ENCODE measurements at regions of chr17 and their contacts with region 1.

Region 1: DNA sequence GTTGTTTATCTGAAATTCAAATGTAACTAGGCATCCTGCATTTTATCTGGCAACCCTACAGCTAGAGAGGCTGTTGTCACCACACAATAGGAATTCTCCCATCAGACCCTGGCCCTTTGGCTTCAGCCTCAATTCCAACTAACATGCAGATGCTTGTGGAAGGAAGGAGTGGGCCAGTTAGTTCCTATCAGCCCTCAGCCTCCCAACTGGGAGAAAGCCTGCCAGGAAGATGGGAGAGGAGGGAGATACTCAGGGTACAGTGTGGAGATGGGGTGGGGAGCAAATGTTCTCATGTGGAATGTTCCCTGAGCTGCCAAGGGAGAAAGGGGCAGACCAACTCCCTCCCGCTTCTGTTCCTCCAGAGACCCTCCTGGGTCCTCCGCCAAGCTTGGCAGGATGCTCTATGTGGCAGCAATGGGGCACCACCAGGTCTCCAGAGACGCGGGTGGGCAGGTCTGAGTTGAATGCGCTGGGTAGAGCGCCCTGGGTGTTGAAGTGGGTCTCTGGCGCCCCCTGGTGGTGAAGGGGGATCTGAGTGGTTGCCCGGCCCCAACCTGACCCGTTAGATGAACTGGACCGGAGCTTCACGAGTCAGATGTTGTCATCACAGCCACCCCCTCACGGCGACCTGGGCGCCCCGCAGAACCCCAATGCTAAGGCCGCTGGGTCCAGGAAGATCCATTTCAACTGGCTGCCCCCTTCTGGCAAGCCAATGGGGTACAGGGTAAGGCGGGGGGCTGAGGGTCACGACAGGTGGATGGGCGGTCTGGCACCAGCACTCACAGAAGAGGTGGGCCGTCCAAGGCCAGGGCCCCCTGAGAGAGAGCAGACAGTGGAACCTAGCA is 15.2 kb downstream of the GALK1 start:
- DNase-seq: peak; percentile 86
- CTCF ChIP-seq: peak; percentile 89

Region 2: DNA sequence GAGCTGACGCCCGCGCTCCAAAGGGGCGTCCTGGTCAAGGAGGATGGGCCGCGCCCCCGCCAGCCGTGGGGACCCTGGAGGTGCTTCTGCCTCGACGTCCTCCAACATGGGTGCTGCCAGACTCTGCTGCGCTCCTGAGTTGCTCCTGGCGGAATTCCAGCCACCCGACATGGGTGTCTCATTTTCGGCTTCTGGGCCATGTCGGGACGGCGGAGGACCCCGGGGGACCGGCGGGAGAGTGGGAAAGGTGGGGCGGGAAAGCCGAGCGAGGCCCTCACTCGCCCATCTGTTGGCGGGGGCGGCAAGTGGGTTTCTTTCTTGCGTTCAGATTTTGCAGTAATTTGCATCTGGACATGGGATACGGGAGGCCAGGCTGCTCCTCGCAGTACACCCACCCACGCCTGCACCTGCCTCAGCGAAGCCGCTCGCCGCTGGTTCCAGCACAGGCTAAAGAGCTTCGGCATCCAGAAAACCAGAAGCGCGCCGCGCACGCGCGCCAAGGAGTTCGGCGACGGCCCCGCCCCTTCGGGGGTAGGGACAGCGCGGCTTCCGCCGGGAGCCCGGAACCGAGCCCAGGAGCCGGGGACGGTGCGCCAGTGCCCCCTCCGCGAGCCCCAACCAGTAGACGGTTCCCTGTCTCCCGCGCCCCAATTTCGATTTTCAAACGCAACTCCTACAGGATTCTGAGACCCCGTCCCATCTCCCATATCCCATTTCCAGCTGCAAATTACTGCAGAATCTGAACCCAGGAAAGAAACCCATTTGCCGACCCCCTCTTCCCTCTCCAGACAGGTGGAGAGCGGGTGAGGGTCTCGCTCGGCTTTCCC is 640.1 kb before region 1 on chr17 and contains the start of gene ARMC7:
- CTCF ChIA-PET with region 1: no interaction called
- POLR2A ChIA-PET with region 1: no interaction called
- DNase-seq: peak; percentile 97
- CTCF ChIP-seq: no peak

Region 3: DNA sequence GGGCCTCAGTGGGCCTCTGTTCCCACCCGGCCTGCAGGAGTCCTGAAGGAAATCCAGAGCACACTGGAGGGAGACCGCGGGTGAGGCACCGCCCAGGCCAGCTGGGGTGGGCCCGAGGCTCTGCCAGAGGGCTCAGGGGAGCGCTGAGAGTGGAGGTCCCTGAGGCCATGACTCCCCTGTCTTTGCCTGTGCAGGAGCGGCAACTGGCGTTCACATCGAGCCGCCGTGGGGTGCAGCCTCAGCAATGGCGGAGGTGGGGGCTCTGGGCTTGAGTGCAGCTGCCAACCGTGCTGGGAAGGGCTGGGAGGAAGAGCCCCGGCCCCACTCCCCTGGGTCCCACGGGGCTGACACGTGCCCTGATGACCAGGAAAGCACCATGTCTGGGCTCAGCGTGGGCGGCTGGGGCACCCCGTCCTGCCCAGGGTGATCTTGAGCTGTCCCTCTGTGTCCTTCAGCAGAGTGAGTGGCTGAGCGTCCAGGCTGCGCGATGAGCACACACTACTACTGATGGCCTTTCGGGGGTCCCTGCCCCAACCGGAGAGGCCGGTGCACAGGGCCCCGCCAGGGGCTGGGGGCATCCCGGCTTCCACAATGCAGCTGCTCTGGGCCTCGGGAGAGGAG is 175.2 kb before region 1 on chr17:
- CTCF ChIA-PET with region 1: interaction called, 11 read pairs
- POLR2A ChIA-PET with region 1: no interaction called
- DNase-seq: no peak
- CTCF ChIP-seq: no peak

Region 4: DNA sequence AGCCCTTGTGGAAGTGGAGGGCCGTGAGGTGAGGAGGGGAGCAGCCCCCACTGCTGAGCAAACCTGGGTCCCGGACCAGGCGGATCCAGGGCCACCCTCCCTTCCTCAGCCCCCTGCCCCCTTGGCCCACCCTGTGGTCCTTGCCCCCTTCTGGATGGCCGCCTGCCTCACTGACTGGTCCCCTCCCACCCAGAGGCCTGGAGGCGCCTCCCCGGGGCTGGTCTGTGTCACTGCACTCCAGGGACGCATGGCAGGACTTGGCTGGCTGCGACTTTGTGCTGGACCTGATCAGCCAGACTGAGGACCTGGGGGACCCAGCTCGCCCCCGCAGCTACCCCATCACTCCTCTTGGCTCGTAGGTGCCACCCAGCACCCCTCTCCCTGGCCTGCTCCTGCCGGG is 135.8 kb before region 1 on chr17:
- CTCF ChIA-PET with region 1: interaction called, 856 read pairs
- POLR2A ChIA-PET with region 1: no interaction called
- DNase-seq: no peak
- CTCF ChIP-seq: no peak

Region 5: DNA sequence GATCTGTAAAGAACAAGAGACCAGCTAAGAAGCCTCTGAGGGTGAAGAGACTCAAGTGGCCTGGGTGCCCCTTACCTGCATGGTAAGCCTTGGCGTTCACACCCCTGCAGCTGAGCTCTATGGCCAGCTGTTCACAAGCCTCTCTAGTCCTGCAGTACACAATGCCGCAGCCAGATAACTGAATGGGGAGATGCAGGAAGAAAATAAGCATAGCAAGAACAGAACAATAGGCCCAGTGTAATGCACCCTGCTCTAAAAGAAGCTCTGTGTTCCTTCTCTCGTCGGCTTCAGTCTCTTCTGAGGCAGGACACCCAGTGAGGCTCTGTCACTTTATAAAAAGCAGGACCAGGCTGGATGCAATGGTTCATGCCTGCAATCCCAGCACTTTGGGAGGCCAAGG is 88.2 kb before region 1 on chr17:
- CTCF ChIA-PET with region 1: interaction called, 52 read pairs
- POLR2A ChIA-PET with region 1: interaction called, 3 read pairs
- DNase-seq: no peak
- CTCF ChIP-seq: no peak

Region 6: GRCh38 chr17:75720725-75721462 is 28.9 kb before region 1 on chr17 and contains the start of gene ITGB4:
- CTCF ChIA-PET with region 1: interaction called, 28 read pairs
- POLR2A ChIA-PET with region 1: no interaction called
- DNase-seq: peak; percentile 83
- CTCF ChIP-seq: no peak

Region 7: DNA sequence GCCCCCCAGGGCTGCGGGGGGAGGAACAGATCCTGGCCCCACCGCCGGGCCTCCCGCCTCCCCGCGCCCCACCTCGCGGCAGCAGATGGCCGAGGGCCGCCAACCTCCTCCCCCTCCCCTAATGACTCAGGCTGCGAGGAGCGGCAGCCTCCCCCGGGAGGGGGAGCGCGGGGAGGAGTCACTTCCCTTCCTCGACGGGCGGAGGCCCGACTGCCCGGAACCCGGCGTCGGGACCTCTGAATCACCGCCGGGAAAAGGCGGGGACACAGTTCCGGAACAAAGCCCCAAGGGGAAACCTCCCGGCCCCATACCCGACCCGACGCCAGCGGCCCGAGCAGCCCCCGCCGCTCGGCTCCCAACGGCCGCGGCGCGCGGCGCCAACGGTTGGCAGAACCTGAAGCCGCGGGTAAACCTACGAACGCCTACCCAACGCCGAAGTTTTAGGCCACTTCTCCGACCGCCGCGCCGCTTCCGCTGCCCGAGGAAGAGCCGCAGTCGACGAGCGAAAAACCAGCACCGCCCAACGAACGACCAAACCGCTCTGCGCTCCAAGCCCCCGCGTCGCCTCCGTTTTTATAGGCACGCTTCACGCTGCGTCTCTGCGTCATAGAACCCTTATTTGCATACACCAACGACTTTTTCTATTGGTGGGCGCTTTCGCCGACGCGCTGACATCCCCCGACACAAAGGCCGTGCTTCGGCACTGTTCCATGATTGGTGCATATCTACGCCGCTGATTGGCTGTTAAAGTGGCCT is 29.6 kb after region 1 on chr17:
- CTCF ChIA-PET with region 1: interaction called, 19 read pairs
- POLR2A ChIA-PET with region 1: interaction called, 21 read pairs
- DNase-seq: peak; percentile 94
- CTCF ChIP-seq: no peak

Region 8: GRCh38 chr17:75995385-75995925 is 245.7 kb after region 1 on chr17:
- CTCF ChIA-PET with region 1: no interaction called
- POLR2A ChIA-PET with region 1: no interaction called
- DNase-seq: no peak
- CTCF ChIP-seq: no peak

Region 9: DNA sequence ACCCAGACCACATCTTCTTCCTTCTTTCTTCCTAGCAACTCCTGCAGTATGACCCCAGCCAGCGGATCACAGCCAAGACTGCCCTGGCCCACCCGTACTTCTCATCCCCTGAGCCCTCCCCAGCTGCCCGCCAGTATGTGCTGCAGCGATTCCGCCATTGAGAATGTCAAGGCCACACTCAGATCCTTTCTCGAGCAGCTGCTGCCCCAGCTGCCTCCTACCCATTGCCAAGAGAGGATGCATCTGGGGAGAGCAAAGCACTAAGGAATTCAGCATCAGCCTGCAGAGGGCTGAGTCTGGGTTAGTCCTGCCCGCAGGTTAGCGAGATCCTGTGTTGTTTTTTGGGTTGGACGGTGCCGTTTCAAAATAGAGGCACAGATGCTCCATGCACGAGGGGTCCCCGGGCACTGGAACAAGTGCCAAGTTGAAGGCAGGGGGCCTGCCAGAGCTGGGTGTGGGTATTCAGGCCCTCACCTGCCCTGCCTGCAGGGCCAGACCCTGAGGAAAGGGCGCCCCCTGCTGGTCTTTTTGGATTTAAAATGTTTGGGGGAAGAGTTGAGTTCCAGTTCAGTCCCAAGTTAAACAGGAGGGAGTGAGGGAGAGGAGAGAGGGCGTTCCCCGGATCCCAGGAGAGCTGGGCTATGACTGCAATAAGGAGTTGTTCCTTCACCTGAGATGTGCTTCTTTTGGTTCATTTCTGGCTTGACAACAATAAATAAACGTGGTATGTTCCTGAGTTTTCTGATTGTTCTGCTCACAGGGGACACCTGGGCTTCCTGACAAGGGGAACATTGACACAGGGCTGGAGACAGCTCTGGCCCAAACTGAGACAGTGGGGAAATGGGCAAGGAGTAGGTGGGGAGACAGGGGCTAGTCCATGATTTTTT is 255.7 kb after region 1 on chr17:
- CTCF ChIA-PET with region 1: interaction called, 11 read pairs
- POLR2A ChIA-PET with region 1: no interaction called
- DNase-seq: peak; percentile 87
- CTCF ChIP-seq: peak; percentile 68

Measured in GM10248 (cell line).